Ovary (tissue), 10 donors: ENCODE measurements at regions of chr2 and their contacts with region 1.

Region 1: GRCh38 chr2:229045671-229046070 is 225.4 kb downstream of the PID1 start:
- DNase-seq: no peak
- H3K4me3 ChIP-seq: no peak overlapping the region
- H3K27ac ChIP-seq: no peak overlapping the region
- H3K4me1 ChIP-seq: no peaks in the 10 kb centered on the region
- H3K27me3 ChIP-seq: no peaks in the 10 kb centered on the region
- CTCF ChIP-seq: no peak
- EP300 ChIP-seq: no peak
- POLR2A ChIP-seq: no peak

Region 2: GRCh38 chr2:228986961-228987360 is 58.7 kb before region 1 on chr2:
- intact Hi-C with region 1: loop called in 1 of 4 experiments (anchors 5 kb)
- DNase-seq: no peak
- H3K4me3 ChIP-seq: no peak overlapping the region
- H3K27ac ChIP-seq: no peak overlapping the region
- H3K4me1 ChIP-seq: no peaks in the 10 kb centered on the region
- H3K27me3 ChIP-seq: no peaks in the 10 kb centered on the region
- CTCF ChIP-seq: no peak
- EP300 ChIP-seq: no peak
- POLR2A ChIP-seq: no peak